ENCODE measurements at regions of chr18 and their contacts with region 1.

Region 1: DNA sequence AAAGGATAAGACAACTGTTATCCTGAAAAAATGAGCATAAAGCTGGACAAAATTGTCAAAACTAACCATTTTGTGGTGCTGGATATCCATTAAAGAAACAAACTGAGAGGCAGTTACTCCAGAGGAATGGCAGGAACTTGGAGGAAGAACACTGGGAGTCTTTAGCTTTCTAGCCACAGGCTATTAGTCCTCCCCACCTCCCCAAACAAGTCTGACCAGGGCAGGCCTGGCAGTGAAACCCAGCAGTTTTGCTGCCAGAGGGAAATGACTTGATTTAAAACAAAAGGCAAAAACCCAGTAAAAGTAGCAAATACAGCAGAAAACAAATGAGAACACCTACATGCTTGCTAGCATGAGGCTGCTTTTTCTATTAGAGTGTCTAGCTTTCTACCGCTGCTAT is 34.9 kb downstream of the OSBPL1A start:
- DNase-seq: no peak
- CTCF ChIP-seq: no peak

Region 2: GRCh38 chr18:24346254-24346653 is 16.5 kb before region 1 on chr18:
- CTCF ChIA-PET with region 1: interaction called, 11 read pairs
- POLR2A ChIA-PET with region 1: no interaction called
- DNase-seq: no peak
- CTCF ChIP-seq: no peak

Region 3: DNA sequence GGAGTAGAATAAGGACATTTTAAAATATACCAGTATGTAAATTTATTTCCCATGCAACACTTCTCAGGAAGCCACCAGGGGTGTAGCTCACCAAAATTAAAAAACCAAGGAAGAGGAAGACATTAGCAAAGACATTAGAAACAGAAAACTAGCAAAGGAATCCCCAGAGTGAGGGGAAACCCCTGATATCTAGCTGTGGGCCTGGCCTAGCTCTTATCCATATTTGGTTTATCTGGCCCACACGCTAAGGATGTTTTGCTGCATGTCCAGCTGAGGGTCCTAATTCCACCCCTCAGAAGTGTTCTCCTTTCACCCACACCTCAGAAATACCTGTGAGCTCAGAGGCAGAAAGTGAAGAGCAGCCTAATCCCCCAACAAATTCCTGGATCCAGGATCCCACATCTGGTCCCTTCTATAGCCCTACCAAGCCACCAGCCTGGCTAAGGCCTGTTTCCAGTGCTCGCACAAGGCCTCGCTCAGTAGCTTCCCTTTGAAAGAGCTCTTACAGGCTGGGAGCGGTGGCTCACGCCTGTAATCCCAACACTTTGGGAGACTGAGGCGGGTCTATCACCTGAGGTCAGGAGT is 17.5 kb after region 1 on chr18:
- CTCF ChIA-PET with region 1: interaction called, 15 read pairs
- POLR2A ChIA-PET with region 1: no interaction called
- DNase-seq: no peak
- CTCF ChIP-seq: no peak

Region 4: GRCh38 chr18:24726727-24727492 is 364.2 kb after region 1 on chr18:
- CTCF ChIA-PET with region 1: interaction called, 16 read pairs
- POLR2A ChIA-PET with region 1: no interaction called
- DNase-seq: peak; percentile 38
- CTCF ChIP-seq: peak; percentile 77

Measured in GM10248 (cell line).